SK-N-SH (cell line): ENCODE measurements at regions of chr11 and their contacts with region 1.

Region 1: DNA sequence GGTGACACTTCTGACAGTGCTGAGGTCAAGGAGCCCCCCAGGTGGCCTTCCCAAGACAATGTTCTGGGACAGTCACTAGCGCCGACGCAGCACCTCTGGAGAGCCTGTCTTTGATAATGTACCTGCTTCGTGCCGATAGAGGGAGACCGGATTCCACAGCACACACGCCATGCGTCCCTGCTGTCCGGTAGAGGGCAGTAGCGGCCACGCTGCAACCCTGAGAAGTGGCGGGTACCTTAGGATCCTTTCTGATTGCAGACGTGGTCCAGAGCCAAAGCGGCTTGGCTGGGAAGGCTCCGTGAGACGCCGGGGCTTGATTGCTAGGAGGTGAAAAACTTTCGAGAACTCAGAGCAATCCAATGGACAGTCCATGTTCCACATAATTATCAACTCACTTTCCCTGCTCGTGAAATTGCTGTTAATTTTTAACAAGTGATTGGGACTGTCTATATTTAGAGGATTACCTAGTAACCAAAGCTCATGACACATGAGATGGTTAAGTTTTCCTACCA is 11.4 kb upstream of the BARX2 start:
- DNase-seq: peak; percentile 79
- H3K4me3 ChIP-seq: peak overlapping the region in 1 of 2 experiments; percentile 28; a peak in 1 of 4 replicates
- H3K27ac ChIP-seq: no peak overlapping the region
- H3K4me1 ChIP-seq: peaks cover 0 to 12% of the 10 kb centered on the region in 2 experiments; a peak in 2 of 4 replicates
- H3K27me3 ChIP-seq: peaks cover 43% of the 10 kb centered on the region
- CTCF ChIP-seq: peak; percentile 98
- EP300 ChIP-seq: no peak
- RAD21 ChIP-seq: peak; percentile 92

Region 2: GRCh38 chr11:129375751-129376657 is 11.8 kb after region 1 on chr11 and contains the start of gene BARX2:
- CTCF ChIA-PET with region 1: interaction called, 16 read pairs
- POLR2A ChIA-PET with region 1: no interaction called
- DNase-seq: peak; percentile 70
- H3K4me3 ChIP-seq: no peak within 1 kb of the TSS; a peak in 2 of 4 replicates
- H3K27ac ChIP-seq: no peak within 1 kb of the TSS
- H3K4me1 ChIP-seq: peaks cover 0 to 7% of the 10 kb centered on the region in 2 experiments; a peak in 1 of 4 replicates
- H3K27me3 ChIP-seq: peaks cover 93% of the 10 kb centered on the region
- CTCF ChIP-seq: peak; percentile 49
- EP300 ChIP-seq: no peak
- RAD21 ChIP-seq: peak; percentile 59
- polyA plus RNA-seq, gene BARX2: not detected in 2 replicates